CD4-positive, alpha-beta memory T cell (primary cell): ENCODE measurements at regions of chr2 and their contacts with region 1.

Region 1: GRCh38 chr2:238190445-238190844 is 13.1 kb downstream of the ILKAP start:
- DNase-seq: no peak
- H3K4me3 ChIP-seq: no peak overlapping the region
- H3K4me3 Mint-ChIP-seq: no peak overlapping the region
- H3K27ac ChIP-seq: no peak overlapping the region
- H3K27ac Mint-ChIP-seq: no peak overlapping the region
- H3K4me1 ChIP-seq: no peaks in the 10 kb centered on the region
- H3K4me1 Mint-ChIP-seq: peaks cover 0 to 5% (median 3%) of the 10 kb centered on the region in 4 donors
- H3K27me3 ChIP-seq: no peaks in the 10 kb centered on the region
- H3K27me3 Mint-ChIP-seq: no peaks in the 10 kb centered on the region

Region 2: GRCh38 chr2:237858294-237859081 is 332.0 kb before region 1 on chr2:
- CTCF ChIA-PET with region 1: no interaction called
- POLR2A ChIA-PET with region 1: no interaction called
- intact Hi-C with region 1: loop called (anchors 10 kb)
- DNase-seq: peak in 4 of 5 donors; percentile 35 to 43 (median 40)
- H3K4me3 ChIP-seq: no peak overlapping the region
- H3K4me3 Mint-ChIP-seq: peak overlapping the region; percentile 62 to 87 (median 70)
- H3K27ac ChIP-seq: no peak overlapping the region
- H3K27ac Mint-ChIP-seq: peak overlapping the region in 1 of 7 donors; percentile 42
- H3K4me1 ChIP-seq: peaks cover 14% of the 10 kb centered on the region
- H3K4me1 Mint-ChIP-seq: peaks cover 5 to 15% (median 6%) of the 10 kb centered on the region in 4 donors
- H3K27me3 ChIP-seq: peaks cover 7% of the 10 kb centered on the region
- H3K27me3 Mint-ChIP-seq: peaks cover 18 to 21% of the 10 kb centered on the region in 2 donors